ENCODE measurements at regions of chr1 and their contacts with region 1.

Region 1: DNA sequence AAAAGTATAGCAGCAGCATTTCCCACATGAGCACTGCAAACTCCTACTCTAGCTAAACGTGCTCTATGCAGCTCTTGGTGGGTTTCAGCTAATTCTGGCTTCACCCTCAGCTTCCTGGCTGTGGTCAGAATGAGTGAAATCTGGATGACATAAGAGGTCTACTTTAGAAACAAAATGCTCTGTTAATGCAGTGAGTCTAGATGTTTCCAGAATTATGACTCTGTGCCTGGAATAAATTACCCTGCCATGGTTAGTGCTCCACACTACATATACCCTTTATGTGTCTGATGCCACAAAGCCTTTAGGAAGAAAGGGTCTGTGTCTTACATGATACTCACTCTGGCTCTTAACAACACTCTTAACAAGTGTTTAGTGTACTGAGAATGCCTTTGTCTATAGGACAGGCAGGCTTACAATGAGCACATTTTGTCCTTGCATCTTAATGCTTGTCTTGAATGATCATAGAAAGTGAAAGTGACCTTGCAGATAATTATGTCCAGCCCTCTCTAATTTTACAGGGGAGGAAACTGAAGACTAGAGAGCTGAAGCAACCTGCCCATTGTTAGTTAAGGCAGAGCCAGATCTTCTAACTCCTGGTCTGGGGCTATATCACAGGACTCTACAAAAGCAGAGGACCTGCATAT is 9.2 kb downstream of the S100A10 start:
- DNase-seq: peak; percentile 25
- ATAC-seq: peak; percentile 91
- H3K4me3 ChIP-seq: peak overlapping the region; percentile 14; the same call in 1 of the 2 replicates
- H3K27ac ChIP-seq: no peak overlapping the region
- H3K4me1 ChIP-seq: peaks cover 15% of the 10 kb centered on the region; the same call in 1 of the 2 replicates
- H3K27me3 ChIP-seq: peaks cover 0 to 2% of the 10 kb centered on the region in 2 experiments; a peak in 2 of 4 replicates
- CTCF ChIP-seq: no peak
- EP300 ChIP-seq: no peak
- POLR2A ChIP-seq: no peak
- RAD21 ChIP-seq: no peak

Region 2: GRCh38 chr1:151968058-151968457 is 16.4 kb before region 1 on chr1:
- CTCF ChIA-PET with region 1: interaction called, 14 read pairs
- POLR2A ChIA-PET with region 1: no interaction called
- RAD21 ChIA-PET with region 1: interaction called, 3 read pairs
- SMC1A ChIA-PET with region 1: interaction called, 9 read pairs
- in situ Hi-C with region 1: no loop called
- intact Hi-C with region 1: no loop called
- DNase-seq: no peak
- ATAC-seq: peak; percentile 84
- H3K4me3 ChIP-seq: no peak overlapping the region
- H3K27ac ChIP-seq: no peak overlapping the region
- H3K4me1 ChIP-seq: no peaks in the 10 kb centered on the region
- H3K27me3 ChIP-seq: 0 out of 4 replicates have a peak, but pooled peaks cover 2 to 5% of the 10 kb centered on the region in 2 experiments
- CTCF ChIP-seq: peak; percentile 66 to 80 (median 79)
- EP300 ChIP-seq: no peak
- POLR2A ChIP-seq: no peak
- RAD21 ChIP-seq: peak; percentile 88

Region 3: GRCh38 chr1:152107984-152108881 is 123.8 kb after region 1 on chr1:
- CTCF ChIA-PET with region 1: no interaction called
- POLR2A ChIA-PET with region 1: no interaction called
- RAD21 ChIA-PET with region 1: no interaction called
- SMC1A ChIA-PET with region 1: no interaction called
- in situ Hi-C with region 1: no loop called
- intact Hi-C with region 1: no loop called
- DNase-seq: no peak
- ATAC-seq: no peak
- H3K4me3 ChIP-seq: no peak overlapping the region
- H3K27ac ChIP-seq: no peak overlapping the region
- H3K4me1 ChIP-seq: peaks cover 5% of the 10 kb centered on the region
- H3K27me3 ChIP-seq: peaks cover 19 to 36% of the 10 kb centered on the region in 2 experiments
- CTCF ChIP-seq: no peak
- EP300 ChIP-seq: no peak
- POLR2A ChIP-seq: no peak
- RAD21 ChIP-seq: no peak

Measured in GM12878 (cell line).